Heart left ventricle (tissue), 16 donors: ENCODE measurements at regions of chr1 and their contacts with region 1.

Region 1: DNA sequence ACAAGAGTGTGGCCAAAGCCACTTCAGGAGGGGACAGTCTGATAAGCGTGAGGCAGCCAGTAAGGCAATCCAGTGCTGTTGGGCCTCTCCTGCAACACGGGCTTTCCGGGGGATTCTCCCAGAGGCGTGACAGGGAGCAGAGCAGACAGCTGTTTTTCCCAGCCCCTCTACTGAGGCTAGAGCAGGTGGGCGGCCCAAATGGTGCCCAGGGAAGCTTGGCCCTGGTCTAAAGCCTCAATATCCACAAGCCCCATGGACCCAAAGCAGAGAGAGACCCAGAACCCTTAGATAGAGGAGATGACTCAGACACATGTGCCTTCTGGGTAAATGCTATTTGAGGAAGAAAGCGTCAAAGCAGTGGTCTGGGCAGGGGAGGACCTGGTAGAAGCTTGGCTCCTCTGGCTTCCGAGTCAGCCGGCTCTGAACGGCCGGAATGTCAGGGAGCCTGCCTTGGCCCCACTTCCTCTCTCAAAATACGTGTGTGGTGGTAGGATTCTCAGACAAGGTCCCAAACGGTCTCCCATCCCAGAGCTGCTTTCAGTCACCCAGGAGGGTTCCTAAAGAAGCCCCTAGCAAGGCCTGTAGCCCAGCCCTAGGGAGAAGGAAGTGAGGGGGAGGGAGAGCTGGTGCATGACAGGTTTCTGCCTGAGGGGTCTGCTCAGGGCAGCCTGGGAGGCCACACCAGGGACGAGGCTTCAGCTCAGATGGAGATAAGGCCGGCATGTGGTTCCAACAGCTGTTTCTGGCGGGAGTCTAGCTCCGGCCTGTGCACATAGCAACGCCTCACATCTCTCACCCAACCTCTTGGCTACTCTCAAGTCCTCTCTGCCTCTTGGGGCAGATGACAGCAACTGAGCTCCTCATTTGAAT is 28.8 kb downstream of the PIK3C2B start:
- DNase-seq: peak in 3 of 5 donors; percentile 53 to 67 (median 54)
- ATAC-seq: peak; percentile 3 to 27 (median 20)
- H3K4me3 ChIP-seq: peak overlapping the region in 9 of 12 donors; percentile 28 to 48 (median 36)
- H3K27ac ChIP-seq: peak overlapping the region; percentile 77 to 99 (median 90)
- H3K4me1 ChIP-seq: peaks cover 24 to 93% (median 79%) of the 10 kb centered on the region in 12 donors
- H3K27me3 ChIP-seq: no peaks in the 10 kb centered on the region
- CTCF ChIP-seq: no peak
- POLR2A ChIP-seq: no peak

Region 2: GRCh38 chr1:204483791-204484190 is 18.0 kb after region 1 on chr1:
- intact Hi-C with region 1: loop called in 1 of 10 experiments (anchors 2 kb)
- DNase-seq: no peak
- ATAC-seq: peak in 2 of 4 donors; percentile 19 to 21
- H3K4me3 ChIP-seq: no peak overlapping the region
- H3K27ac ChIP-seq: peak overlapping the region in 6 of 12 donors; percentile 4 to 67 (median 34)
- H3K4me1 ChIP-seq: peaks cover 3 to 85% (median 52%) of the 10 kb centered on the region in 12 donors
- H3K27me3 ChIP-seq: no peaks in the 10 kb centered on the region
- CTCF ChIP-seq: no peak
- POLR2A ChIP-seq: no peak

Region 3: GRCh38 chr1:204640578-204640977 is 174.8 kb after region 1 on chr1:
- intact Hi-C with region 1: no loop called
- DNase-seq: no peak
- ATAC-seq: no peak
- H3K4me3 ChIP-seq: no peak overlapping the region
- H3K27ac ChIP-seq: no peak overlapping the region
- H3K4me1 ChIP-seq: peaks cover 0 to 6% (median 0%) of the 10 kb centered on the region in 12 donors
- H3K27me3 ChIP-seq: peaks cover 0 to 14% (median 0%) of the 10 kb centered on the region in 9 donors
- CTCF ChIP-seq: no peak
- POLR2A ChIP-seq: no peak